ENCODE measurements at regions of chr10 and their contacts with region 1.

Region 1: DNA sequence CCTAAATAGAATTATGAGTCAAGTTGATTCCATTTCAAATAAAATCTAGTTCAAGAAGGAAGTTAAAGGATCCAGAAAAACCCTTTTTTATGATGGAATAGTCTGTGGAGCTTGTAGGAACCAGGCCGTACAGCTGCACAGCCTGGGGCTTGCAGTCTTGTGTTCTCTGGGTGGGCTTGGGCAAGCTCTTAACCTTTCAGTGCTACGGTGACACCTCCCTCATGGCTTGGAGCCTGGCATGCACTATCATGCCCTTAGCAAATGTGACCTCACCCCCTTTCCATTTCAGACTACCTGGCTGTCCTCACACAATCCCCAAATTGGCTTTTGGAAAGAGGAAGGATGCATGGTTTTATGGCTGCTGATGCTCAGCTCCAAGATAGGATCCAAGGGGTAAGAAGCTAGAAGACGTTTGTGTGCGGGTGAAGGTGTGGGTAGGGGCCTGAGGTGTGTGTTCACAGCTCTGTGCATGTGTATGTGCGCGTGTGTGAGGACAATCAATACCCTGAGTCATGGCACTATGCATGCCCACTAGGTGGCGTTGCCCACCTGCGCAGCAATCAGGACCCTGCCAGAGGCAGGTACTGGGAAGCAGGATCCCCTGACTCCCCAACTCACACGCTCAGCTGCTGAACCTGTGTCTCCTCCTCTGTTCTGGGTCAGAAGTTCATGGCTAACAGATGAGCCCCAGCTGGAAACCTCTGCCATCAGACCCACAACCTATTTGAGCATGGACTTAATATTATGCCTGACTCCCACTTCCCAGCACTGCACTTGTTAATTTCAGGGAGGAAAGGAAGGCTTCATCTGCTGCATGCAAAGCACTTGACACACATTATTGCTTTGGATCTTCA is 113.4 kb downstream of the PTPN20 start:
- DNase-seq: peak; percentile 16
- ATAC-seq: peak; percentile 97
- H3K4me3 ChIP-seq: no peak overlapping the region
- H3K27ac ChIP-seq: no peak overlapping the region
- H3K4me1 ChIP-seq: no peaks in the 10 kb centered on the region
- H3K27me3 ChIP-seq: no peaks in the 10 kb centered on the region; a peak in 2 of 4 replicates
- CTCF ChIP-seq: peak; percentile 91 to 94 (median 91)
- EP300 ChIP-seq: no peak
- POLR2A ChIP-seq: no peak
- RAD21 ChIP-seq: peak; percentile 82

Region 2: DNA sequence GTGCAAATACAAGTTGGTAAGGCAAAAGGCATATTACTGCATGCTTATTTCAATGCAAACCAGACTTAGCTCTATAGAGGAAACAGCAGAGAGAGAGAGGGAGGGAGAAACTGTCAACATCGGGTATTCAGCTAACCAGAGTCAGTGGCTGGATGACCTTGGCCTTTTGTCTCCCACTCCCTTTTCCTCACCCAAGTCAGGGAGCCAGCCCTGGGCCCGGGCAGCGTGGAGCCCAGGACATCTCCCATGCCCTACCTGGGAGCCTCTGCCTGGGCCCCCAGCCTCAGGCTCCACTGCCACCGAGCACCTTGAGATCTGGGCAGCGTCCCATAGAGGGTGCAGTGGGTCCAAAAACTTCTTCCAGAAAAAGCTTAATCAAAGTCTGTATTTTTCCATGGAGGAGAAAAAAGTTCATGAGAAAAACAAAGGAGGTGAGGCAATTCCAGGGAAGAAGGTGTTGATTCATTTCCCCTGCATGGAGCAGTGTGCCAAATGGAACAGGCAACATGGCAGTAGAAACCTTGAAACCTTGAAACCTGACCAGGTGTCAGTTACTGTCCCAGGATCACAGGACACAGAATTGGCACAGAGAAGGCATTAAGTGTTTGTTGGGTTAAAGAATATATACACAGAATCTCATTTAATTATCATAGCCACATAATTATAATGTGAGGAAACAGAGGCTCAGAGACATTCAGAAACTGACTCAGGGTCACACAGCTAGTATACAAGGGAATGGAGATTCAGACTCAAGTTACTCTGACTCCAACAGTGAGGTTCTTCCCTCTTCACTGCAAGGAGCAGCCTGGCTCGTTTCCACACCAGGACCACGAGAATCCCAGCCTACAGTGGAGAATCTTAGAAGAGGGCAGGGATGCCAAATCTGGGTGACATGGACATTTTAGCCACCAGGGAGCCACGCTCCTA is 988.4 kb before region 1 on chr10:
- CTCF ChIA-PET with region 1: no interaction called
- POLR2A ChIA-PET with region 1: no interaction called
- RAD21 ChIA-PET with region 1: no interaction called
- SMC1A ChIA-PET with region 1: no interaction called
- in situ Hi-C with region 1: no loop called
- intact Hi-C with region 1: no loop called
- DNase-seq: no peak
- ATAC-seq: no peak
- H3K4me3 ChIP-seq: no peak overlapping the region
- H3K27ac ChIP-seq: no peak overlapping the region
- H3K4me1 ChIP-seq: no peaks in the 10 kb centered on the region
- H3K27me3 ChIP-seq: no peaks in the 10 kb centered on the region; a peak in 1 of 4 replicates
- CTCF ChIP-seq: no peak
- EP300 ChIP-seq: no peak
- POLR2A ChIP-seq: no peak
- RAD21 ChIP-seq: no peak

Region 3: GRCh38 chr10:47340608-47341170 is 316.1 kb after region 1 on chr10:
- CTCF ChIA-PET with region 1: interaction called, 17 read pairs
- POLR2A ChIA-PET with region 1: no interaction called
- RAD21 ChIA-PET with region 1: interaction called, 5 read pairs
- SMC1A ChIA-PET with region 1: interaction called, 3 read pairs
- in situ Hi-C with region 1: no loop called
- intact Hi-C with region 1: no loop called
- DNase-seq: peak; percentile 9
- ATAC-seq: peak; percentile 81
- H3K4me3 ChIP-seq: no peak overlapping the region
- H3K27ac ChIP-seq: no peak overlapping the region
- H3K4me1 ChIP-seq: no peaks in the 10 kb centered on the region
- H3K27me3 ChIP-seq: no peaks in the 10 kb centered on the region; a peak in 2 of 4 replicates
- CTCF ChIP-seq: peak; percentile 81 to 95 (median 94)
- EP300 ChIP-seq: no peak
- POLR2A ChIP-seq: no peak
- RAD21 ChIP-seq: peak; percentile 67

Measured in GM12878 (cell line).